Activated CD8-positive, alpha-beta T cell treated with anti-CD3 and anti-CD28 coated beads, Interleukin-2, amount 10 ng/mL, durations not matched to agents 7 days and 5 days (primary cell): ENCODE measurements at regions of chr9 and their contacts with region 1.

Region 1: DNA sequence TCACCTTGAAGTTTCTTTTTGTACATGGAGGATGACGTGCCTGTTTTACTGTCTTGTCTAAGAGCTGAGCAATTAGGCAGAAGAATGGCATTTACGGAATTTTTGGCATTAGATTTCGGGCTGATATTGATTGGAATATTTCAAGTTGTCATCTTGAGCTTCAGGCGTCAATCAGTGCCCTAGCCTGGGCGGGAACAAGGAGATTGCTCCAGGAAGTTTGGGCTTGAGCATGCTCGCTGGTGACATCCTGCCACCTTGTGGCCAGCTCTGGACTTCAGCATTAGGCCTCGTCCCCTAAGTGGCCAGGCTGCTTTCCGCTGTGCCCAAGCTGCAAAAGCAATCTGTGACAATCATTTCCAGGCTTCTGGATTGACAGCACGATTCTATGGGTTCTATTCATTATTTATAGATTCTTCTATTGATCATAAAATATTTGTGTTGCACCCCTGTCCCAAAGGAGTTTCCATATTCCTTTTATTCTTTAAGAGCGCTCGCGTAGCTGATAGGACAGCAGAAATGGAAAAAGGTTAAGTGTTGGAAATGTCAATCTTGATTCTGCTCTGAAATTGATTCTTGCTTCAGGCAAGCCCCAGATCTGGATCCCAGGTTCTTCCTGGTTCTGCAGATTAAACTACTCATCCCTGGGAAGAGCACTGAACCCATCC is 79.3 kb downstream of the SLC28A3 start:
- DNase-seq: peak; percentile 63
- ATAC-seq: peak; percentile 67
- H3K4me3 Mint-ChIP-seq: no peak overlapping the region
- H3K27ac Mint-ChIP-seq: no peak overlapping the region
- H3K4me1 Mint-ChIP-seq: peaks cover 9% of the 10 kb centered on the region
- H3K27me3 Mint-ChIP-seq: peaks cover 20% of the 10 kb centered on the region

Region 2: GRCh38 chr9:83937911-83938323 is 323.3 kb before region 1 on chr9:
- CTCF ChIA-PET with region 1: interaction called, 18 read pairs
- POLR2A ChIA-PET with region 1: no interaction called
- DNase-seq: peak; percentile 53
- ATAC-seq: peak; percentile 74
- H3K4me3 Mint-ChIP-seq: no peak overlapping the region
- H3K27ac Mint-ChIP-seq: no peak overlapping the region
- H3K4me1 Mint-ChIP-seq: no peaks in the 10 kb centered on the region
- H3K27me3 Mint-ChIP-seq: no peaks in the 10 kb centered on the region

Region 3: GRCh38 chr9:84271531-84271900 is 10.3 kb after region 1 on chr9:
- CTCF ChIA-PET with region 1: interaction called, 13 read pairs
- POLR2A ChIA-PET with region 1: no interaction called
- DNase-seq: peak; percentile 73
- ATAC-seq: peak; percentile 94
- H3K4me3 Mint-ChIP-seq: peak overlapping the region; percentile 65
- H3K27ac Mint-ChIP-seq: no peak overlapping the region
- H3K4me1 Mint-ChIP-seq: peaks cover 12% of the 10 kb centered on the region
- H3K27me3 Mint-ChIP-seq: peaks cover 25% of the 10 kb centered on the region

Region 4: DNA sequence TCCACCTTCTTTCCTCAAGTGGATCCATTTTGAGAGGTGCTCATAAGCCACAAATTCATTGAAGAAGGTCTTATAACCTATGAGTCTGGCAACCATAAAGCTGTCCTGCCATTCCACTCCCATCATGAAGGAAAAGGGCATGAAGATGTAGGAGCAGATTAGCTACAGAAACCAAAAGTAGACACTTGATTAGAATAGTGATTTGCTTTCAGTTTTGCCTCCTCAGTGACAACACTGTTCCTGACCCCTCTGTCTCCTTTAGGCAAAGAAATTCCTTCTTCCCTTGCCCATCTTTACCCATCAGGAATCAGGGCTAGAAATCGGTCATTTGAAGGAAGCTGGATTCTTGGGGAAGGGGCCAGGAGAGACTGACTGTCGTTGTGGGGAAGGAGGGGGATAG is 24.2 kb after region 1 on chr9:
- CTCF ChIA-PET with region 1: interaction called, 21 read pairs
- POLR2A ChIA-PET with region 1: no interaction called
- DNase-seq: no peak
- ATAC-seq: no peak
- H3K4me3 Mint-ChIP-seq: no peak overlapping the region
- H3K27ac Mint-ChIP-seq: no peak overlapping the region
- H3K4me1 Mint-ChIP-seq: peaks cover 20% of the 10 kb centered on the region
- H3K27me3 Mint-ChIP-seq: peaks cover 11% of the 10 kb centered on the region

Region 5: GRCh38 chr9:84304166-84304565 is 43.0 kb after region 1 on chr9:
- CTCF ChIA-PET with region 1: interaction called, 12 read pairs
- POLR2A ChIA-PET with region 1: no interaction called
- DNase-seq: no peak
- ATAC-seq: no peak
- H3K4me3 Mint-ChIP-seq: no peak overlapping the region
- H3K27ac Mint-ChIP-seq: no peak overlapping the region
- H3K4me1 Mint-ChIP-seq: peaks cover 10% of the 10 kb centered on the region
- H3K27me3 Mint-ChIP-seq: peaks cover 1% of the 10 kb centered on the region